Left ventricle myocardium inferior (tissue), 1 donor: ENCODE measurements at regions of chr18 and their contacts with region 1.

Region 1: DNA sequence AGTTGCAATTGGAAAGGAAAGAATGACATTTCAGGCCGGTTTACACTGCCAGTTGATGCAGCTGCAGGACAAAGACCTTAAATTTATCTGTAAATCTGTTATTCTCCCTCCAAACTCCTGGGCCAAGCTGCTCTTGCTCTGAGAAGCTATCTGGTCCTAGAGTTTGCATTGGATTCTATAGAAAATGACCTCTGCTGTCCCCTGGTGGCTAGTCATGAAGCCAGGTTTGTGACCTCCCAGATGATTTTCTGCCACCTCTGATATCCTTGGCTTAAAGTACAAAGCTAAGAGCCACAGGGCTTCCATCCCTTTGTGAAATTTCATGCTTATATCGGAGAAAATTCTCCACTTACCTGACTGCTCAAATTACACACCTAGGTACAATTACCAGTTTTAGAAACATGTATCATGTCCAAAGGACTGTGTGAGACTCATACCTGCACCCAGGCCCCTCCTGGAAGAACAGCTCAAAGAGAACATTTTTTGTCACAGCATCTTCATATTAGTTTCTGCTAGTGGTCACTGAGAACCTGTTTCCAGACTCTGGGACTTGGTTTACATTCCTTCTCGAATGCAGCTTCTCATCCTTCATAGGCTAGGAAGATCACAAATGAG is 28.9 kb upstream of the IER3IP1 start:
- DNase-seq: no peak
- H3K4me3 ChIP-seq: no peak overlapping the region
- H3K27ac ChIP-seq: no peak overlapping the region
- H3K4me1 ChIP-seq: peaks cover 3% of the 10 kb centered on the region
- H3K27me3 ChIP-seq: peaks cover 34% of the 10 kb centered on the region
- CTCF ChIP-seq: peak; percentile 84

Region 2: GRCh38 chr18:47050468-47050867 is 154.5 kb before region 1 on chr18:
- intact Hi-C with region 1: loop called (anchors 5 kb)
- DNase-seq: no peak
- H3K4me3 ChIP-seq: no peak overlapping the region
- H3K27ac ChIP-seq: no peak overlapping the region
- H3K4me1 ChIP-seq: no peaks in the 10 kb centered on the region
- H3K27me3 ChIP-seq: no peaks in the 10 kb centered on the region
- CTCF ChIP-seq: peak; percentile 72

Region 3: DNA sequence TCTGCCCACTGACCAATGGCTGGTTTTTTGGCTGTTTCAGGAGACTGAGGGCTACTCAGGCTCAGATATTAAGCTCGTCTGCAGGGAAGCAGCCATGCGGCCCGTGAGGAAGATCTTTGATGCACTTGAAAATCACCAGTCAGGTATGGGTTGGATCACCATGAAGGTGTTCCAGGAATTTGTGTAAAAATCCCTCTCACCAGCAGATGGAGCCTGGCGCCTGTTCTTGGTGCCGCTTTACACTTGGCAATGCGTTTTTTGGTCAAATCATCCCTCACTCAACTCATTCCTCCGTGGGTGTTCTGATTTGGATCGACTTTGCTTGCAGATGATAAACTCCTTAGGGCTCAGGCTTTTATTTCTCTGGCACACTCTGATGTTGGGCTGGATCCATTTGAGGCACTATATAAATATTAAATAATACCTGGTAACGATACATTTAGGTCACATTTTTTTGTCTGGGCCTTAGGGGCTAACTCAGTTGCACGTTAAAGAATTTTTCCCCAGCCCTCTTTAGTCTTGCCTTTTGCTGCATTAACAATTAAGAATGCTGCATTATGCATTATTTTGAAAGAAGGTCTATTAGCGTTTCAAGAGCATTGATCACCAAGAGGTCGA is 104.7 kb before region 1 on chr18:
- intact Hi-C with region 1: loop called (anchors 2 kb)
- DNase-seq: peak; percentile 16
- H3K4me3 ChIP-seq: no peak overlapping the region
- H3K27ac ChIP-seq: no peak overlapping the region
- H3K4me1 ChIP-seq: peaks cover 6% of the 10 kb centered on the region
- H3K27me3 ChIP-seq: no peaks in the 10 kb centered on the region
- CTCF ChIP-seq: peak; percentile 80